AG04449 (cell line): ENCODE measurements at regions of chr5 and their contacts with region 1.

Region 1: GRCh38 chr5:134527146-134527960 is 1.9 kb downstream of the JADE2 start:
- DNase-seq: no peak
- H3K4me3 ChIP-seq: peak overlapping the region; percentile 75
- CTCF ChIP-seq: peak; percentile 88

Region 2: GRCh38 chr5:134394932-134395331 is 132.4 kb before region 1 on chr5:
- CTCF ChIA-PET with region 1: interaction called, 14 read pairs
- POLR2A ChIA-PET with region 1: no interaction called
- DNase-seq: no peak
- H3K4me3 ChIP-seq: no peak overlapping the region
- CTCF ChIP-seq: no peak

Region 3: DNA sequence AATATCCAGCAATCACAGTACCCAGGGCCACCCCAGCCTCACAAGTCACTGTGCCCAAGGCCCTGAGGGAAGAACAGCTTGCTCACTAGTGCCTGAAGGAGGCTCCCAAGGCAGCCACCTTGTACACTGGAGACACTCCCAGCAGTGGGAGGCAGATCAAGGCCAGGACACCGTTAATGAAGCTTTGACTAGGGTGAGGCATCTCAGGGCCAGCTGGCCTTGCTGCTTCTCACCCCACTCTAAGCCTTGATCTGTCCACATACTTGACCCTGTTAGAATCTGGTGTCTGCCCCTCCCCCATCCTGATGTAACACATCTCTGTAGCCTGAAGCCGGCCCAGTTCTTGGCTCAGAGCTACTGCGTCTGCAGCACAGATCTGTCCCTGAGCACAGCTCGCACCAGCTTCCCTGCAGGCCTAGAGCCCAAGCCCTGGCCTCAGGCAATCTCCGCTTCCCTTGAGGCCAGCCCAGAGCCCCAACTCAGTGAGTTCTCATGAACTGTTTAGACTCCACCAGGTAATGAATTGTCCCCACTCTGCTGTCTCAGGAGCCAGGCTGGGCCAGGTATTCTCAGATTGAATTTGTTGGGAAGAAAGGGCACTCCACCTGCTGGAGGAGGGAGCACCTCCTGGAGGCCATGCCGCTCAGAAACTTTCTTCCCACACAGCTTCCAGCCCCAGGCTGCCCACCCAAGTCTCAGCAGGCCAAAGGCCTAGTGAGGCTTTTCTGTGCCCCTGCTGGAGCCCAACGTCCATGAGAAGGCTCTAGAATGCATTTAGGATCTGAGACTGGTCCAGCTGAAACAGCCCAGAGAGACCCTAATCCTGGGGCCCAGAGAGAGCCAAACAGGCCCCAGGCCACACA is 15.3 kb before region 1 on chr5:
- CTCF ChIA-PET with region 1: interaction called, 17 read pairs
- POLR2A ChIA-PET with region 1: interaction called, 3 read pairs
- DNase-seq: no peak
- H3K4me3 ChIP-seq: no peak overlapping the region
- CTCF ChIP-seq: no peak

Region 4: GRCh38 chr5:134547579-134547978 is 20.2 kb after region 1 on chr5:
- CTCF ChIA-PET with region 1: interaction called, 47 read pairs
- POLR2A ChIA-PET with region 1: no interaction called
- DNase-seq: no peak
- H3K4me3 ChIP-seq: no peak overlapping the region
- CTCF ChIP-seq: no peak

Region 5: GRCh38 chr5:134577796-134578363 is 50.5 kb after region 1 on chr5:
- CTCF ChIA-PET with region 1: interaction called, 11 read pairs
- POLR2A ChIA-PET with region 1: interaction called, 3 read pairs
- DNase-seq: no peak
- H3K4me3 ChIP-seq: no peak overlapping the region
- CTCF ChIP-seq: peak; percentile 89